HEK293 (cell line): ENCODE measurements at regions of chr20 and their contacts with region 1.

Region 1: GRCh38 chr20:50724851-50725721 is 6.3 kb upstream of the PARD6B start:
- H3K4me3 ChIP-seq: no peak overlapping the region
- H3K27ac ChIP-seq: no peak overlapping the region
- H3K4me1 ChIP-seq: no peaks in the 10 kb centered on the region
- CTCF ChIP-seq: no peak

Region 2: GRCh38 chr20:50695135-50695872 is 29.8 kb before region 1 on chr20:
- CTCF ChIA-PET with region 1: no interaction called
- POLR2A ChIA-PET with region 1: no interaction called
- H3K4me3 ChIP-seq: no peak overlapping the region
- H3K27ac ChIP-seq: no peak overlapping the region
- H3K4me1 ChIP-seq: no peaks in the 10 kb centered on the region
- CTCF ChIP-seq: no peak

Region 3: GRCh38 chr20:50713657-50714101 is 11.4 kb before region 1 on chr20:
- CTCF ChIA-PET with region 1: interaction called, 10 read pairs
- POLR2A ChIA-PET with region 1: interaction called, 4 read pairs
- H3K4me3 ChIP-seq: no peak overlapping the region
- H3K27ac ChIP-seq: no peak overlapping the region
- H3K4me1 ChIP-seq: peaks cover under 1% of the 10 kb centered on the region; the same call in 1 of the 2 replicates
- CTCF ChIP-seq: no peak